ENCODE measurements at regions of chr19 and their contacts with region 1.

Region 1: DNA sequence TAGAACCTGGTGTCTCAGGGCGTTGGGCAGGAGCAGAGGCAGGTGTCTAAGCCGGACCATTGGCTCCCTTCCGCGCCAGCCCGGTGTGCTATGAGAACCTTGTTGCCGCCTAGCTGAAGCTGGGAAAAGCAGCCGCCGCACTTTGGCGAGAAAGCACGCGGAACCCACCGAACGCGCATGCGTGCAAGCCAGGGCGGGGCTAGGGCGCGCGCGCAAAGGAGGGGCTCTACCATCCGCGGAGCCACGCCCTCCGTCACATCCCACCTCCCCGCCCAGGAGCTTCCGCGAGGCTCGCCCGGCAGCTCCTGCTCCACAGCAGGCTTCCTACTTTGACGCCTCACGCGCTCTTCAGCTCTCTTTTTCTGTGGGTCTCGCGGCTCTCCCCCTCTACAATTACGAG is 51.3 kb downstream of the WDR87 start:
- DNase-seq: no peak
- ATAC-seq: no peak
- H3K4me3 ChIP-seq: no peak overlapping the region
- H3K27ac ChIP-seq: no peak overlapping the region
- H3K4me1 ChIP-seq: no peaks in the 10 kb centered on the region
- H3K27me3 ChIP-seq: no peaks in the 10 kb centered on the region
- CTCF ChIP-seq: no peak

Region 2: GRCh38 chr19:38173291-38174041 is 318.4 kb after region 1 on chr19:
- CTCF ChIA-PET with region 1: no interaction called
- POLR2A ChIA-PET with region 1: interaction called, 13 read pairs
- intact Hi-C with region 1: no loop called
- DNase-seq: no peak
- ATAC-seq: no peak
- H3K4me3 ChIP-seq: no peak overlapping the region
- H3K27ac ChIP-seq: no peak overlapping the region
- H3K4me1 ChIP-seq: no peaks in the 10 kb centered on the region
- H3K27me3 ChIP-seq: no peaks in the 10 kb centered on the region
- CTCF ChIP-seq: no peak

Measured in PC-3 (cell line).